ENCODE measurements at regions of chr2 and their contacts with region 1.

Region 1: DNA sequence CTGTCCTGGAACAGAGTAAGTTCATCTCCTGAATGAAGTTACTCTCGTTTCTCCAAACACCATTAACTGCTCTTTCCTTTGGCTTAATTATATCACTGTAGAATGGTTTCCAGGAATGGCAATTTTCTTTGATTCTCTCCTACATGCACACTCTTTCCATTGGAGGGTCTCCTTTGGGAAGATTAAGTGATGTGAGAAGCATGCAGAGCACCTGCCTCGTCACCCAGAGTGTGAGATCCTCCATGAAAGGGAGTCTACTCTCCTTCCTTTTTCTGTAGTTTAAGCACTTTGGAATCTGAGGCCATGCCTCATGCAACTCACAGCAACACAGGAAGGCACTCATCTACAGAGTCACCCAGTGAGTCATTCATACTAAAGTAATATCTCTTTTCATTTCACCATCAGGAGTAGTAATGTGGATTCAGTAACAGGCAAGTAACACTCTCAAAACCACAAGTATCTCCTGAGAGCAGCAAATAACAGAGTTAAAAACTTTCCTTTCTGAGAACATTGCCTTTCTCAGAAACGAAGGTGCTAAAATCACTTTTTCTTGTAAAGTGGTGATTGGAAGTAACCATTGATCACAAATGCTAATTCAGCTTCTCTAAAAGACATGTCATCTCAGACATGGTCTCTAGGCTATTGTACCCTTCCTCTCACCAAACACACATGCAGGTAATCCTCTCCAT is 52.8 kb upstream of the IL1RL1 start:
- DNase-seq: peak; percentile 64
- H3K4me3 Mint-ChIP-seq: no peak overlapping the region
- H3K27ac Mint-ChIP-seq: peak overlapping the region; percentile 96
- H3K4me1 Mint-ChIP-seq: peaks cover 45% of the 10 kb centered on the region
- H3K27me3 Mint-ChIP-seq: no peaks in the 10 kb centered on the region

Region 2: DNA sequence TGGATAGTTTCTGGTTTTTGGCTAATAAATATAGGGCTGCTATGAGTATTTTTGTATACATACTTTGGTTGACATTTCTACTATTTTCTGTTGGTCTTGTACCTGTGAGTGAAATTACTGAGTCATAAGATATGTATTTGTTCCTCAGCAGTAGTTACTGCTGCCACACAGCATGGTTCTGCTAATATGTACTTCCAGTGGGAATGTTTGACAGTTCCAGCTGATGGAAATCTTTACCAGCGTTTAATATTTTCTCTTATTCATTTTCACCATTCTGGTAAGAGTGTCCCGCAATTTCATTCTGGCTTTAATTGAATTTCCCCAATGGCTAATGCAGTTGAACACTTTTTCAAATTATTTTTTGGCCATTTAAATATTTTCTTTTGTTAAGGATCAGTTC is 173.9 kb before region 1 on chr2:
- CTCF ChIA-PET with region 1: no interaction called
- POLR2A ChIA-PET with region 1: no interaction called
- intact Hi-C with region 1: no loop called
- DNase-seq: no peak
- H3K4me3 Mint-ChIP-seq: no peak overlapping the region
- H3K27ac Mint-ChIP-seq: no peak overlapping the region
- H3K4me1 Mint-ChIP-seq: peaks cover 56% of the 10 kb centered on the region
- H3K27me3 Mint-ChIP-seq: no peaks in the 10 kb centered on the region

Region 3: DNA sequence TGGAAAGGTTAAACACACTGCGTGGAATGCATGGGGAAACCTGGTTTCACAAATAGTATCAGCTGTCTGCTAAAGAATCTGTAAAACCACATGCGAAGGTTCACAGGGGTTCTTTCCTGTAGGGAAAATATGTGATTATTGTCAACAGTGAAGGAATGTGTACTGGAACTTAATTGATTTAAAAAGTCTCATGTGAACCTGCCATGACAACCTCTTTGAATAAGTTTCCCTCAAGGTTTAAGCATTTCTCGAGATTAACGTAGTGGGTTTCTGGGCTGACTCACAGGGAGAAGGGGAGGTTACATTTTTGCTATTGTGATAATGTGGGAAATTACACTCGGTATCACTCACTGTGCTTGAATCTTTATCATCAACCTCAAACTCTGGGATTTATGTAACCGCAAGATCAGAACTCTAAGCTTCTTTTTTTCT is 144.2 kb before region 1 on chr2:
- CTCF ChIA-PET with region 1: no interaction called
- POLR2A ChIA-PET with region 1: no interaction called
- intact Hi-C with region 1: loop called (anchors 1 kb)
- DNase-seq: peak; percentile 58
- H3K4me3 Mint-ChIP-seq: no peak overlapping the region
- H3K27ac Mint-ChIP-seq: peak overlapping the region; percentile 59
- H3K4me1 Mint-ChIP-seq: peaks cover 73% of the 10 kb centered on the region
- H3K27me3 Mint-ChIP-seq: peaks cover 12% of the 10 kb centered on the region

Region 4: DNA sequence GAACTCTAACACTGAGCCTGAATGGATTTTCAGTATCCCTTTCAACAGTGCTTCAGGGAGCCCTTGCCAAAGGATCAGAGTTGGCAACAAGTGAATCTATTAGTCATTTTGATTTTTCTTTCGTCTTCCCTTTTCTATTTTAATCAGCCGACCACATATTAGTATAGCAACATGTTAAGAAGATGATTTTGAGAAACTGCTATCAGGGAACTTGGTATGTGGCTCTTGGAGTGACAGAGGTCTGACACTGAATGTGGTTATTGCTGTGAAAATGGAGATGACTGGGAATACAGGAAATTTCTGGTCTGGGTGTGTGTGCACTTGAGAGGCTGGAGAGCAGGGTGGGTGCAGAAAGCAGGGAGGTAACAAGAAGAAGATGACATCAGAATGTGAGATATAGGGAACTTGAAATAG is 24.2 kb after region 1 on chr2:
- CTCF ChIA-PET with region 1: no interaction called
- POLR2A ChIA-PET with region 1: no interaction called
- intact Hi-C with region 1: no loop called
- DNase-seq: no peak
- H3K4me3 Mint-ChIP-seq: no peak overlapping the region
- H3K27ac Mint-ChIP-seq: no peak overlapping the region
- H3K4me1 Mint-ChIP-seq: peaks cover 2% of the 10 kb centered on the region
- H3K27me3 Mint-ChIP-seq: no peaks in the 10 kb centered on the region

Region 5: DNA sequence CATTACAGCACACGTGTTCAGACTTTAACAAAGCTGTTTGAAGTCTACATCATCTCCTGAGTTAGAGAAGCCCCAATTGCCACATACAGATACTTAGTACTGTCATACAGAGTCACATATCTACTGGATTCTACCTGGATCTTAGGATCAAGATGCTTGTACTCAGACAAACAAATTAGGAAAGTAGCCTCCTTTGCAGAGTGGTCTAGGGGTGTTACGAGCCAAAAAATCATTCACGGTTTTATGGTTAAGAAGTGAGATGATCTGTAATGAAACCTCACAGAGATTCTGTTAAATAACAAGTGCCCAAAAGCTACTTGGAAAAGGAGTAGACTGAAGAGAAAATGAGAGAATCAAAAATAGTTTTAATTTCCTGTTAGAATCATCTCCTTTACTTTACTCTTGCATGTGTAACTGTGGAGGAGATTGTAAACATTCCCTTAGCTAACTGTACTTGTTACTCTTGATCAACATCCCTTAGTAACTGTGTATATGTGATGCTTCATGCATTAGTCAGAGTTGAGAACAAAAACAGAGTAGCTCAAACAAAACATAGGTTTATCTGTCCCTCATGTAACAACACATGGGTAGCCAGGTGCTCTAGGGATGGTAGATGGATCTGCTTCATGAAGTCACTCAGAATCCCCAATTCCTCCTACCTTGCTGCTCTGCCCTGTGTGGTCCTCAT is 36.4 kb after region 1 on chr2:
- CTCF ChIA-PET with region 1: interaction called, 5 read pairs
- POLR2A ChIA-PET with region 1: no interaction called
- intact Hi-C with region 1: loop called (anchors 1 kb)
- DNase-seq: no peak
- H3K4me3 Mint-ChIP-seq: no peak overlapping the region
- H3K27ac Mint-ChIP-seq: no peak overlapping the region
- H3K4me1 Mint-ChIP-seq: peaks cover 33% of the 10 kb centered on the region
- H3K27me3 Mint-ChIP-seq: peaks cover 5% of the 10 kb centered on the region

Region 6: DNA sequence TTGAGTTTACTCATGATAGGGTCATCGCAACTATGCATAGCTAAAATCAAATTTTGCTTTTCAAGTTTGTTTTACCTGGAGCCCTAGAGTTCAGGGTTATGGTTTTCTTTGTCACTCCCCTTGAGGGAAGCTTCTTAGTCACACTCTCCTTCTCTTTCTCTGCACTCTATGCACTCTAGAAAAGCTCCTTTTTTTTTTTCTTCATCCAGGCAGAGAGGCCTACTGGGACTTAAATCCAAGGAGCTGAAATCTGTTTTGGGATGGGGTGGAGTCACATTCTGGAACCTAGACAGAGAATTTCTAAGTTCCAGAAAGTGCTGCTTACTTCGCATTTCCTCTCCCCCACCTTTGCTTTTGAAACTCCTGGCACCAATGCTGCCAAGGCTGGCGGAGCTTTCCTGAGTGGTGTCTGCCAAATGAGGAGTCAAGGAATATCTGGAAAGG is 78.0 kb after region 1 on chr2:
- CTCF ChIA-PET with region 1: interaction called, 15 read pairs
- POLR2A ChIA-PET with region 1: interaction called, 4 read pairs
- intact Hi-C with region 1: loop called (anchors 1 kb)
- DNase-seq: no peak
- H3K4me3 Mint-ChIP-seq: no peak overlapping the region
- H3K27ac Mint-ChIP-seq: no peak overlapping the region
- H3K4me1 Mint-ChIP-seq: peaks cover 7% of the 10 kb centered on the region
- H3K27me3 Mint-ChIP-seq: peaks cover 2% of the 10 kb centered on the region

Region 7: DNA sequence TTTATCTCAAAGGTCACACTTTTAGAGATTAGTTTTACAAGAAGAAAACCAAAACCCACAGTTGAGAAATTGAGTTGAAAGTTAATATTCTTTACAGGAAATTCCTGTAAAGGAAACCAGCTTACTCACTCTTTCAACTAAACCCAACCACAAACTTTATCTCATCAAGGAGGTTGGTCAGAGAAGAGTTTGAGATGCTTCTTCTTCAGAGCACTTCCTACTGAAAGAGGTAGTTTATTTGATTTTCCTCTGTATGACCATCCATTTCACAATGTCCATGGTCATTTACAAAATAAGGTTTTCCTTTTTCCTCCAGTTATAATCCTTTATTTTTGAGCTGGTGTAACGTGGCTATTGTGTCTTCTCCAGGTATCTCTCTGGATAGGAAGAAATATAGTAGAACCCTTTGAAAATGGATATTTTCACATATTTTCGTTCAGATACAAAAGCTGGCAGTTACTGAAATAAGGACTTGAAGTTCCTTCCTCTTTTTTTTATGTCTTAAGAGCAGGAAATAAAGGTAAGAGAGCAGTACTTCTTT is 160.0 kb after region 1 on chr2:
- CTCF ChIA-PET with region 1: no interaction called
- POLR2A ChIA-PET with region 1: no interaction called
- intact Hi-C with region 1: loop called (anchors 2 kb)
- DNase-seq: no peak
- H3K4me3 Mint-ChIP-seq: peak overlapping the region; percentile 64
- H3K27ac Mint-ChIP-seq: peak overlapping the region; percentile 85
- H3K4me1 Mint-ChIP-seq: peaks cover 59% of the 10 kb centered on the region
- H3K27me3 Mint-ChIP-seq: peaks cover 6% of the 10 kb centered on the region

Measured in activated CD4-positive, alpha-beta memory T cell treated with anti-CD3 and anti-CD28 coated beads for 36 hours (primary cell).